Aorta (tissue), 5 donors: ENCODE measurements at regions of chr3 and their contacts with region 1.

Region 1: GRCh38 chr3:102229062-102229655 is 205.7 kb upstream of the ZPLD1 start:
- DNase-seq: peak; percentile 73 to 80
- ATAC-seq: peak; percentile 85
- H3K4me3 ChIP-seq: no peak overlapping the region
- H3K27ac ChIP-seq: no peak overlapping the region
- H3K4me1 ChIP-seq: no peaks in the 10 kb centered on the region
- H3K27me3 ChIP-seq: no peaks in the 10 kb centered on the region

Region 2: DNA sequence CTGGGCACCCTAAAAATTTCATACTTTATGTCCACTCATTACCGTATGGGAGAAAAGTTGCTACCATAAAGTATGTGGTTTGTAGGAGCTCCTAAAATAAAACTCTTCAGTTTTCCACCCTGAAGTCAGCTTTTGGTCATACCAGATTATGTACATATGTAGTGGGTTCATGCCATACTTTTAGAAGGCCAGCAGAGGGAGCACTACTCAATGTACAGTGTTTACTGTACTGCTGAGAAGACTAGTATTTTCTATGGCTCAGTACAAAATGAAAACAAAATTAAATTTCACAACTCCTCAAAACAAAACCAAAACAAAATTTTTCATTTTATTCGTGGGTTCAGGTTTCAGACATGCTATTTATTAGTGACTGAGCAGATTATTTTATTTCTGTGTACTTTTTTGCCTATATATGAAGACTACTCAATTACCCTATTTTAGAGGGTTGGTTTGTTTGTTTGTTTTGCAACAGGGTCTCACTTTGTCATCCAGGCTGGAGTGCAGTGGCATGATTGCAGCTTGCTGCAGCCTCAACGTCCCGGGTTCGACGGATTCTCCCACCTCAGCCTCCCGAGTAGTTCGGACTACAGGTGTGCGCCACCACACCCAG is 425.9 kb before region 1 on chr3:
- intact Hi-C with region 1: loop called in 1 of 2 experiments (anchors 2 kb)
- DNase-seq: no peak
- ATAC-seq: peak; percentile 93
- H3K4me3 ChIP-seq: no peak overlapping the region
- H3K27ac ChIP-seq: no peak overlapping the region
- H3K4me1 ChIP-seq: no peaks in the 10 kb centered on the region
- H3K27me3 ChIP-seq: no peaks in the 10 kb centered on the region

Region 3: DNA sequence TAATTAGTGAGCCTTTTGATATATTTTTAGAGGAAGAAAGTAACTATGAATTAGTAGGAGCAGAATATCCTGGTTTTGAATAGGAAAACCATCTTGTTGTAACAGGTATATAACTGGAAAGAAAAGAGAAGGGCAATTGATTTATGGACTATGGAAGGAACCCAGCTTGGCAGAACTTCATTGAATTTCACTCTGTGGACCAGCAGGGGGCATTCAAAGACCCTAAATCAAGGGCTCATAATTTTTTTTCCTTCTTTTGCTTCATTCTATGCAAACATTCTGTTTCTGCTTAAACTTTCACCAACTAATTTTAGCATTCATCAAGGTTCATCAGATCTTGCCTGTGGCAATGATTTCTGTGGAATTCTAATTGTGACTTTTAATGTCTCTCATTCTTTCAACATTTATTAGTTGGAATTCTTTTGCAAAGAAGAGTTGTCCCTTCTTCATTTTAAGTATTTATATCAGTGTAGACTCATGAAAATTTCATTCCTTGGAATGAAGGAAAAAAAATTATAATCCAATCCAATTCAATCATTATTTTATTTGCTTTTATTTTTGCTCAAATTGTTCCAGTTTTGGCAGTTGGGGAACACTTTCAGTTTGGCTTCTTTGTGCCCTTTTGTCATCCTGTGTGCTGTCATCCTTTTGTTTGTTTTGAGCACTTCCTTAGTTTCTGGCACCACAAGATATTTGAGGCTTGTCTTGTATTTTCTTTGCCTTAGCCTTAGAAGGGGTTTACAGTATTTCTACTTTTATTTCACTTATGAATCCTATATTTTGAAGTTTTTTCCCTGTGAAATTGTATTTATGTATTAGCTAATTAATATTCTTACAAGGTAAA is 419.8 kb before region 1 on chr3:
- intact Hi-C with region 1: loop called (anchors 1 to 2 kb)
- DNase-seq: no peak
- ATAC-seq: peak; percentile 60
- H3K4me3 ChIP-seq: no peak overlapping the region
- H3K27ac ChIP-seq: no peak overlapping the region
- H3K4me1 ChIP-seq: no peaks in the 10 kb centered on the region
- H3K27me3 ChIP-seq: no peaks in the 10 kb centered on the region

Region 4: DNA sequence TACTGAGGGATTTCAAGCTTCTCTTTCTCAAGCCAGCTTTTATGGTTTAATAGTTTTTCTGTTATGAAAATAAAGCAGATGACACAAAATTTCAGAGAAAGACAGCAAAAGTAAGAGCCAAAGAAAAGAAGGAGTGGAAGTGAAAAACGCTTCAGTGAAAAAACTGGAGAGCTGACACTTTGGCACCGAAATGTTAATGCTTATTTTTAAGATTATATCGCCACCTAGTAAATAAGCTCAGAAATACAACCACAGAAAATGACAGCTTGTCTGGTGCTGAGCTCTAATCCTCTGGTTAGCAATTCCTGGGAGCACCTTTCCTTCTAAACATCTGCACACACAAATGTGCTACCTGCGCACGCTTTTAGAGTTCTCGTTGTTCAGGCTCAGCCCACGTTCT is 307.3 kb after region 1 on chr3:
- intact Hi-C with region 1: loop called (anchors 2 to 5 kb)
- DNase-seq: no peak
- ATAC-seq: no peak
- H3K4me3 ChIP-seq: no peak overlapping the region
- H3K27ac ChIP-seq: no peak overlapping the region
- H3K4me1 ChIP-seq: no peaks in the 10 kb centered on the region
- H3K27me3 ChIP-seq: no peaks in the 10 kb centered on the region

Region 5: GRCh38 chr3:102544741-102545140 is 315.6 kb after region 1 on chr3:
- intact Hi-C with region 1: loop called in 1 of 2 experiments (anchors 5 kb)
- DNase-seq: no peak
- ATAC-seq: no peak
- H3K4me3 ChIP-seq: no peak overlapping the region
- H3K27ac ChIP-seq: no peak overlapping the region
- H3K4me1 ChIP-seq: no peaks in the 10 kb centered on the region
- H3K27me3 ChIP-seq: no peaks in the 10 kb centered on the region